ENCODE measurements at regions of chr6 and their contacts with region 1.

Region 1: GRCh38 chr6:10478187-10479040 is 42.7 kb upstream of the GCNT2 start:
- DNase-seq: peak in 3 of 9 donors; percentile 4 to 31 (median 15)
- ATAC-seq: no peak
- H3K4me3 ChIP-seq: no peak overlapping the region
- H3K4me3 Mint-ChIP-seq: no peak overlapping the region
- H3K27ac ChIP-seq: no peak overlapping the region
- H3K27ac Mint-ChIP-seq: no peak overlapping the region
- H3K4me1 ChIP-seq: no peaks in the 10 kb centered on the region
- H3K4me1 Mint-ChIP-seq: peaks cover 0 to 3% (median 0%) of the 10 kb centered on the region in 7 donors
- H3K27me3 ChIP-seq: no peaks in the 10 kb centered on the region
- H3K27me3 Mint-ChIP-seq: peaks cover 0 to 36% (median 22%) of the 10 kb centered on the region in 5 donors

Region 2: GRCh38 chr6:10800829-10801535 is 322.6 kb after region 1 on chr6:
- CTCF ChIA-PET with region 1: interaction called, 9 read pairs
- POLR2A ChIA-PET with region 1: no interaction called
- intact Hi-C with region 1: loop called in 1 of 2 experiments (anchors 1 kb)
- DNase-seq: peak; percentile 21 to 68 (median 56)
- ATAC-seq: peak; percentile 91
- H3K4me3 ChIP-seq: no peak overlapping the region
- H3K4me3 Mint-ChIP-seq: no peak overlapping the region
- H3K27ac ChIP-seq: no peak overlapping the region
- H3K27ac Mint-ChIP-seq: no peak overlapping the region
- H3K4me1 ChIP-seq: no peaks in the 10 kb centered on the region
- H3K4me1 Mint-ChIP-seq: peaks cover 0 to 2% (median 0%) of the 10 kb centered on the region in 7 donors
- H3K27me3 ChIP-seq: no peaks in the 10 kb centered on the region
- H3K27me3 Mint-ChIP-seq: no peaks in the 10 kb centered on the region